CD8-positive, alpha-beta T cell (primary cell): ENCODE measurements at regions of chr1 and their contacts with region 1.

Region 1: DNA sequence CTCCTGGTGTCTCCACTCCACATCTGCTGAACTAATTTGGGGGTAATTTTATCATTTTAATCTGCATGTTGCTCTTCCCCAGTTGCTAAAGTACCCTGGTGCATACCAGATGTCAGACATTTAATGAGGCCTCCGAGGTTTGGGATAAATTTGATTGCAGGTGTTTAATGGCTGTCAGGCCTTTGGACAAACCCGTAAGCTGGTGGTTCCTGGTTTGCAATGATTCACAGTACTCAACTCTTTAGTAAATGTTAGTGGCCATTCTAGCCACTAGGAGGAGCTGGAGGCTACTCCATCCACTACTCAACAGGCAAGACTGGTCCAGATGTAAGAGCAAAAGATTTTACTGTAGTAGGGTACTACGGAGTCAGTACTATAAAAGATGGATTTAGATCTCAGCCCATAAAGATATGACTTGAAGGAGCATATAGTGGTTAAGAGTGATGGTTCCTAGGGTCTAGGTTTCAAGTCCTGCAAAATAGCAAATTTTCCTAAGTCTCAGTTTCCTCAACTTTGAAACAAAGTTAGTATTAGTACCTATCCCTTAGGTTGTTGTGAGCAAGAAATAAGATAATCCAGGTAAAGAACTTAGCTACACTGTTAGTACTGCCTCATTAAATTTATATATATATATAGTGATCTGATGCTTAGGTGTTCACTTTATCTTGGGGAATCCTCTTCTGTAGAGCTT is 132.8 kb downstream of the SNX7 start:
- DNase-seq: peak; percentile 9 to 80 (median 51)
- ATAC-seq: peak; percentile 93
- H3K4me3 ChIP-seq: no peak overlapping the region
- H3K4me3 Mint-ChIP-seq: no peak overlapping the region
- H3K27ac ChIP-seq: no peak overlapping the region
- H3K27ac Mint-ChIP-seq: no peak overlapping the region
- H3K4me1 ChIP-seq: peaks cover 18% of the 10 kb centered on the region
- H3K4me1 Mint-ChIP-seq: peaks cover 24% of the 10 kb centered on the region
- H3K27me3 ChIP-seq: no peaks in the 10 kb centered on the region
- H3K27me3 Mint-ChIP-seq: no peaks in the 10 kb centered on the region
- CTCF ChIP-seq: peak; percentile 79

Region 2: DNA sequence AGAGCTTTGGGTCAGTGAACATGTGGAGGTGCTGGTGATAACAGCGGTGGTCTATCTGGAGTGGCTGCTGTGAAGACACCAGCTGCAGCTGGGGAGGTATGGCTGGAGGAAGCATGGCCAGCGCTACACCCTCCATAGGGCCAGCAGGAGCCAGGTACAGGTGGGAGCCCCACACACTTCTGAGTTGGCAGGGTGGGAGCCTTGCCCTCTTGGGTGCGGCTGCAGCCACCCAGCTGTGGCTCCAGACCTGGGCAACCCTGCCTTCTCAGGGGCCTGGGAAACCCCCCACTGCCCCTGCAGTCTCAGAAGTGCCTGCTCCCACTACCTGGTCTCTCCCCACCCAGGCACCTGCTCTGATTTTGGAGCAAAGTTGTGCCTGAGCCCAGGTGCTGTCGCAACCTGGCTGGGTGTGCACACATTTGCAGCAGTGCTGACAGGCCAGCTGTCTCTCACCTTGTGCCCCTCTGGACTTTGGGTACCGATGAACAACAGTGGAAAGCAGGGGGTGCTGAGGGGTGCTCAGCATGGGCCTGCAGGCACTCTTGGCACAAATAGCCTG is 949.7 kb before region 1 on chr1:
- CTCF ChIA-PET with region 1: no interaction called
- POLR2A ChIA-PET with region 1: no interaction called
- intact Hi-C with region 1: no loop called
- DNase-seq: no peak
- ATAC-seq: no peak
- H3K4me3 ChIP-seq: no peak overlapping the region
- H3K4me3 Mint-ChIP-seq: no peak overlapping the region
- H3K27ac ChIP-seq: no peak overlapping the region
- H3K27ac Mint-ChIP-seq: no peak overlapping the region
- H3K4me1 ChIP-seq: peaks cover under 1% of the 10 kb centered on the region
- H3K4me1 Mint-ChIP-seq: peaks cover 8% of the 10 kb centered on the region
- H3K27me3 ChIP-seq: no peaks in the 10 kb centered on the region
- H3K27me3 Mint-ChIP-seq: no peaks in the 10 kb centered on the region
- CTCF ChIP-seq: no peak

Region 3: GRCh38 chr1:98001764-98002163 is 792.6 kb before region 1 on chr1:
- CTCF ChIA-PET with region 1: no interaction called
- POLR2A ChIA-PET with region 1: no interaction called
- intact Hi-C with region 1: no loop called
- DNase-seq: no peak
- ATAC-seq: no peak
- H3K4me3 ChIP-seq: no peak overlapping the region
- H3K4me3 Mint-ChIP-seq: no peak overlapping the region
- H3K27ac ChIP-seq: no peak overlapping the region
- H3K27ac Mint-ChIP-seq: no peak overlapping the region
- H3K4me1 ChIP-seq: no peaks in the 10 kb centered on the region
- H3K4me1 Mint-ChIP-seq: no peaks in the 10 kb centered on the region
- H3K27me3 ChIP-seq: no peaks in the 10 kb centered on the region
- H3K27me3 Mint-ChIP-seq: no peaks in the 10 kb centered on the region
- CTCF ChIP-seq: no peak

Region 4: DNA sequence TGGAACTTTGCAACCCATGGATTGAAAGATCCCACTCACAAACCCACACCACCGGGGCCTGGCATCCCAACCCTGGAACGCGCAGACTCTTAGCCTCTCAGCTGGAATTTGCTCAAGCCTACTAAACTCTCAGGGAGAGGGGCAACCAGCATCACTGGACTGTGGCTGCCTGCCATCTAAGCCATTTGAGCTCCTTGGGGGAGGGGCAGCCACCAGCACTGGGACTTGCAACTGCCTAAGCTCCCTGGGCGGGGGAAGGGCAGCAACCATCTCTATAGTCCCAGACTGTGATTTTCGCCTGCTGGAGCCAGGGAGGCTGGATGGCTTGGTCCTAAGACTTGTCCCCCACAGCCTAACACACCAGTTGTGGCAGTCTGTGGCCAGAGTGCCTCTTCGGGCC is 10.5 kb before region 1 on chr1:
- CTCF ChIA-PET with region 1: interaction called, 13 read pairs
- POLR2A ChIA-PET with region 1: no interaction called
- intact Hi-C with region 1: no loop called
- DNase-seq: no peak
- ATAC-seq: no peak
- H3K4me3 ChIP-seq: no peak overlapping the region
- H3K4me3 Mint-ChIP-seq: no peak overlapping the region
- H3K27ac ChIP-seq: no peak overlapping the region
- H3K27ac Mint-ChIP-seq: no peak overlapping the region
- H3K4me1 ChIP-seq: no peaks in the 10 kb centered on the region
- H3K4me1 Mint-ChIP-seq: no peaks in the 10 kb centered on the region
- H3K27me3 ChIP-seq: peaks cover 0 to 2% of the 10 kb centered on the region in 2 experiments
- H3K27me3 Mint-ChIP-seq: peaks cover 8% of the 10 kb centered on the region
- CTCF ChIP-seq: no peak

Region 5: GRCh38 chr1:98929437-98929836 is 135.1 kb after region 1 on chr1:
- CTCF ChIA-PET with region 1: no interaction called
- POLR2A ChIA-PET with region 1: no interaction called
- intact Hi-C with region 1: no loop called
- DNase-seq: no peak
- ATAC-seq: no peak
- H3K4me3 ChIP-seq: no peak overlapping the region
- H3K4me3 Mint-ChIP-seq: no peak overlapping the region
- H3K27ac ChIP-seq: no peak overlapping the region
- H3K27ac Mint-ChIP-seq: no peak overlapping the region
- H3K4me1 ChIP-seq: no peaks in the 10 kb centered on the region
- H3K4me1 Mint-ChIP-seq: peaks cover 5% of the 10 kb centered on the region
- H3K27me3 ChIP-seq: no peaks in the 10 kb centered on the region
- H3K27me3 Mint-ChIP-seq: no peaks in the 10 kb centered on the region
- CTCF ChIP-seq: no peak

Region 6: DNA sequence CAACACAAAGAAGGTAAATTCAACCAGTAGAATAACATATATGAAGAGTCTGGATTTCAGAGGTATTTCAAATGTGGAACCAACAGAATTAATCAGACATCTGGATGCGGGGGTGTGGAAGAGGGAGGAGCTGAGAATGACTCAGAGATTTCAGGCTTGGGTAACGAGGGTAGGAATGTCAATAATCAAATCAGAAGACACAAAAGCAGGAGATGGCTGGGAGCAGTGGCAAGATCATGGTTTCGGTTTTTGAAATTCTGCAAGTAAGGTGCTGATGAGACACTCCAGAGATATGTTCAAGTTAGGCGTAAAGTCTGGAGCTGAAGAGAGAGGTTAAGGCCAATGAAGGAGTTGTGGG is 146.4 kb after region 1 on chr1:
- CTCF ChIA-PET with region 1: interaction called, 26 read pairs
- POLR2A ChIA-PET with region 1: no interaction called
- intact Hi-C with region 1: loop called (anchors 1 to 5 kb)
- DNase-seq: no peak
- ATAC-seq: no peak
- H3K4me3 ChIP-seq: no peak overlapping the region
- H3K4me3 Mint-ChIP-seq: no peak overlapping the region
- H3K27ac ChIP-seq: no peak overlapping the region
- H3K27ac Mint-ChIP-seq: no peak overlapping the region
- H3K4me1 ChIP-seq: no peaks in the 10 kb centered on the region
- H3K4me1 Mint-ChIP-seq: peaks cover 3% of the 10 kb centered on the region
- H3K27me3 ChIP-seq: no peaks in the 10 kb centered on the region
- H3K27me3 Mint-ChIP-seq: no peaks in the 10 kb centered on the region
- CTCF ChIP-seq: no peak

Region 7: DNA sequence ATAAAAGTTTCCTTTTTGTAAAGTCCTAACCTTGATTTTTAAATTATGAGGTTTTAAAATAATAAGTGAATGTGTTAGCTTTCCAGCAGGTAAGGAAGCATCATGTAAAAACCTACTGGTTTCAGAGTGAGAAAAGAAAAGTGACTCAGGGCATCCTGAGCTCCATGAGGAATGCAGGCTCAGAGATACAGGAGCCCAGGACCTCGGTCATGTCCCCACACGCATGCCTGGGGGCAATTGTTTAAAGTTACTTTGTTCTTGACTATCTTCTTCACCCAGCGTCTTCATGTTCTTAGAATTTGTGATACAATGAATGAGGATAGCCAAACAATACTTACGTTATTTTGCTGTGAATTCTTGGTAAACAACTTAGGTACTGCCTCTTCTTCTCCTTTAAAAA is 327.7 kb after region 1 on chr1:
- CTCF ChIA-PET with region 1: no interaction called
- POLR2A ChIA-PET with region 1: no interaction called
- intact Hi-C with region 1: loop called in 1 of 2 experiments (anchors 10 kb)
- DNase-seq: no peak
- ATAC-seq: no peak
- H3K4me3 ChIP-seq: no peak overlapping the region
- H3K4me3 Mint-ChIP-seq: no peak overlapping the region
- H3K27ac ChIP-seq: no peak overlapping the region
- H3K27ac Mint-ChIP-seq: no peak overlapping the region
- H3K4me1 ChIP-seq: no peaks in the 10 kb centered on the region
- H3K4me1 Mint-ChIP-seq: no peaks in the 10 kb centered on the region
- H3K27me3 ChIP-seq: no peaks in the 10 kb centered on the region
- H3K27me3 Mint-ChIP-seq: no peaks in the 10 kb centered on the region
- CTCF ChIP-seq: no peak

Region 8: DNA sequence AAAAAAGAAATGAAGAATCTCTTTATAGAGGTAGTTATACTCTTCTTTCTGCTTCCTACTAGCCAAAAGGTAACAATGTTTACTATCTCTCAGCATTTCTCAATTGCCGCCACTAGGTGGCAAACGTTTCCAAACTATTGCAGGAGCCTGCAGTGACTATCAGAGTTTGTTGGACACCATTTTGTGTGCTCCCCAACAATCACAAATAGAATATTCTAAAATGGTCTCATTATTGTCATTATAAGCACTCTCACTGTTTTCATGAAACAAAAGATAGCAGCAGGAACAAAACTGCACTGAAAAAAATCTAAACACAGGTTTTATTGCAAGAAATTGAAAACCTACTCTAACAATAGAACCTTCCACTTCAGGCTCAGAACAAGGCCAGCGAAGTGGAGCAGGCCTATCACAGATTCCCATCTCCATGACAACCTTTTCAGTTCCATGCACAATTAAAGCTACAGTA is 386.0 kb after region 1 on chr1:
- CTCF ChIA-PET with region 1: interaction called, 5 read pairs
- POLR2A ChIA-PET with region 1: no interaction called
- intact Hi-C with region 1: loop called in 1 of 2 experiments (anchors 1 kb)
- DNase-seq: peak; percentile 13 to 71 (median 53)
- ATAC-seq: peak; percentile 61
- H3K4me3 ChIP-seq: no peak overlapping the region
- H3K4me3 Mint-ChIP-seq: no peak overlapping the region
- H3K27ac ChIP-seq: no peak overlapping the region
- H3K27ac Mint-ChIP-seq: no peak overlapping the region
- H3K4me1 ChIP-seq: no peaks in the 10 kb centered on the region
- H3K4me1 Mint-ChIP-seq: no peaks in the 10 kb centered on the region
- H3K27me3 ChIP-seq: no peaks in the 10 kb centered on the region
- H3K27me3 Mint-ChIP-seq: peaks cover 4% of the 10 kb centered on the region
- CTCF ChIP-seq: peak; percentile 97

Region 9: GRCh38 chr1:99707535-99708142 is 913.3 kb after region 1 on chr1:
- CTCF ChIA-PET with region 1: no interaction called
- POLR2A ChIA-PET with region 1: no interaction called
- intact Hi-C with region 1: loop called (anchors 2 kb)
- DNase-seq: peak in 8 of 9 experiments; percentile 12 to 58 (median 44)
- ATAC-seq: peak; percentile 58
- H3K4me3 ChIP-seq: no peak overlapping the region
- H3K4me3 Mint-ChIP-seq: no peak overlapping the region
- H3K27ac ChIP-seq: no peak overlapping the region
- H3K27ac Mint-ChIP-seq: no peak overlapping the region
- H3K4me1 ChIP-seq: peaks cover 3% of the 10 kb centered on the region
- H3K4me1 Mint-ChIP-seq: peaks cover 9% of the 10 kb centered on the region
- H3K27me3 ChIP-seq: no peaks in the 10 kb centered on the region
- H3K27me3 Mint-ChIP-seq: peaks cover 2% of the 10 kb centered on the region
- CTCF ChIP-seq: peak; percentile 77